Right ventricle myocardium inferior (tissue), 1 donor: ENCODE measurements at regions of chr5 and their contacts with region 1.

Region 1: DNA sequence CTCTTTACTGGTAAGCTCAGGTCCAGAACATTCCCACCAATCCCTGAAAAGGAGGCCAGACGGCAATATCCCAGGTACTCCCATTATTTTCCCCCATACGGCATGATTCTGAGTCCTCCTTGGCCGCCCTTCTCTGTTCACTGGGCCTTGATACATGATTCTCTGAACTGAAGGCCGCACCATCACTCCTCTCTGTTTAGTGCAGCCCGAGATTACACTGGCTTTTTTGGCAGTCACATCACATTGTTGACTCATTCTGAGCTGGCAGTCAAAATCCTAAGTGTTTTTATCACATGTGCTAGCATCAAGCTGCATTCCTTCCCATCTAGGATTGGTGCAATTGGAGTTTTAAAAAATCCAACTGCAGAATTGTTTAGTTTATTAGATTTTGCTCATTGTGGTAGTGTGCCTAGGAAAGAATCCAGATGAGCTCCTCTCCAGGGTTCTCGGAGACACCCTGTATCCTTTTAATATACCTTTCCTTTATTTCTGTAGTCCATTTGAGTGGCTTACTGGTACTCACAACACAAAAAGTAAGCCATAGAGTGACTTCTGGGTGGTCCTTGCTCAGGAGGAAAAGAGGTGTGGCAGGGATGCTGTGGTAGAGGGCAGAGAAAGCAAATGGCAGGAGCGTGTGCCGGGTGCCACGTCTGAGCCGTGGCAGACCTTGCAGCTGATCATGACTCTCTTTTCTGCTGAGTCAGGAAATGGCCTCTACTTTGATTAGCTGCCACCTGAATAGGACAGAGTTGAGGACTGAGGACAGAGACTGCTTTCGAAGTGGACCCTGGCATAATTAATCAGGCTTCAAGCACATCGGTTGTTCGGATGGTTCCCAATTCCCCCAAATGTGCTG is 121.1 kb upstream of the IL12B start:
- DNase-seq: no peak
- ATAC-seq: peak; percentile 97

Region 2: DNA sequence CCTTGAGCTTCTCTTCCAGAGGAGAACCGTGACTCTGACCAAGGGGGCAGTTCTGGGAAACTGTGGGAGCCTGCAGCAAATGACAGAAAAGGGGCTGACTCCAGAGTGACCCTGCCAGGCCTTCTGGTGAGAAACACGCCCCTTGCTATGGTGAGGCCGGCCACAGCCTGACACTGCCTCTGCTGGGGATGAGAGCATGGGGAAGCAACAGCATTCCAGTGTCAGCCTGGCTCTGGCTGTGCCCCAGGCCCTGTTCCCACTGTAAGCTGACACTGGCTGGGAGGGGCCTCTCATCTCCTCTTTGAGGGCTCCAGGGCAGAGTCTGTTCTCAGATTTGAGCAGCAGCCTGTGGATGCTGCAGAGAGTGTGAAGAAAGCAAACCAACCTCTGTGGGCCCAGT is 58.9 kb after region 1 on chr5:
- intact Hi-C with region 1: loop called (anchors 2 kb)
- DNase-seq: peak; percentile 87
- ATAC-seq: peak; percentile 97